ENCODE measurements at regions of chr12 and their contacts with region 1.

Region 1: GRCh38 chr12:51970904-51971646 is 19.6 kb downstream of the ACVR1B start:
- DNase-seq: peak; percentile 79
- H3K4me3 Mint-ChIP-seq: peak overlapping the region; percentile 55
- H3K27ac Mint-ChIP-seq: peak overlapping the region; percentile 82
- H3K4me1 Mint-ChIP-seq: peaks cover 61% of the 10 kb centered on the region
- H3K27me3 Mint-ChIP-seq: no peaks in the 10 kb centered on the region

Region 2: GRCh38 chr12:50151047-50151687 is 1819.9 kb before region 1 on chr12:
- CTCF ChIA-PET with region 1: no interaction called
- intact Hi-C with region 1: no loop called
- DNase-seq: no peak
- H3K4me3 Mint-ChIP-seq: no peak overlapping the region
- H3K27ac Mint-ChIP-seq: no peak overlapping the region
- H3K4me1 Mint-ChIP-seq: peaks cover 23% of the 10 kb centered on the region
- H3K27me3 Mint-ChIP-seq: no peaks in the 10 kb centered on the region

Region 3: GRCh38 chr12:51368640-51369517 is 602.2 kb before region 1 on chr12:
- CTCF ChIA-PET with region 1: no interaction called
- intact Hi-C with region 1: loop called (anchors 1 kb)
- DNase-seq: peak; percentile 97
- H3K4me3 Mint-ChIP-seq: peak overlapping the region; percentile 37
- H3K27ac Mint-ChIP-seq: peak overlapping the region; percentile 86
- H3K4me1 Mint-ChIP-seq: peaks cover 41% of the 10 kb centered on the region
- H3K27me3 Mint-ChIP-seq: no peaks in the 10 kb centered on the region

Region 4: GRCh38 chr12:51823875-51824565 is 147.1 kb before region 1 on chr12:
- CTCF ChIA-PET with region 1: interaction called, 5 read pairs
- intact Hi-C with region 1: loop called (anchors 1 kb)
- DNase-seq: peak; percentile 50
- H3K4me3 Mint-ChIP-seq: no peak overlapping the region
- H3K27ac Mint-ChIP-seq: no peak overlapping the region
- H3K4me1 Mint-ChIP-seq: peaks cover 28% of the 10 kb centered on the region
- H3K27me3 Mint-ChIP-seq: no peaks in the 10 kb centered on the region

Region 5: DNA sequence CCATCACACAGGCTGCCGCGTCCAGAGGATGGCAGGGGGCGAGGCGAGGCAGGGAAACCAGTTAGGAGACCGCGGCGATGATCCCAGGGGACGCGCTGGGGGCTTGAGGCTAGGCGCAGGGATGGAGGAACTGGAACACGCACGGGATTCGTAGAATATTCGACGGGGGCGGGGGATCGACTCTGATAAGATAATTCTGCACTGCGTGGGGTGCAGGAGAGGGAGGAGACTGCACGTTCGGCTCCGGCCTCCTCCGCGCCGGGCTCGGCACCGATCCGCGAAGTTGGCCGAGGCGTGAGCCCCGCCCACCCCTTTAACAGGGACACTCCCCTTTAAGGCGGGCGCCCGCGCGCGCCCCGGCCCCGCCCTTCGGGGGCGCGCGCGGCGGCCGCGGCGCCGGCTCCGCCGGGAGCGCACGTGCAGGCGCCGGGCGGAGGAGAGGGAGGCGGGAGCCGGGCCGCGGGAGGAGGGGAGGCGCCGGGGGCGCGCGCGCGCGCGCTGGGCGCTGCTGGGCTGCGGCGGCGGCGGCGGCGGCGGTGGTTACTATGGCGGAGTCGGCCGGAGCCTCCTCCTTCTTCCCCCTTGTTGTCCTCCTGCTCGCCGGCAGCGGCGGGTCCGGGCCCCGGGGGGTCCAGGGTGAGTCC is 19.8 kb before region 1 on chr12 and contains the start of gene ACVR1B:
- CTCF ChIA-PET with region 1: interaction called, 8 read pairs
- intact Hi-C with region 1: loop called (anchors 1 kb)
- DNase-seq: peak; percentile 91
- H3K4me3 Mint-ChIP-seq: peak within 1 kb of the TSS; percentile 93
- H3K27ac Mint-ChIP-seq: peak within 1 kb of the TSS; percentile 54
- H3K4me1 Mint-ChIP-seq: peaks cover 41% of the 10 kb centered on the region
- H3K27me3 Mint-ChIP-seq: peaks cover 4% of the 10 kb centered on the region
- total RNA-seq, gene ACVR1B: 8.7 to 9.1 TPM

Region 6: DNA sequence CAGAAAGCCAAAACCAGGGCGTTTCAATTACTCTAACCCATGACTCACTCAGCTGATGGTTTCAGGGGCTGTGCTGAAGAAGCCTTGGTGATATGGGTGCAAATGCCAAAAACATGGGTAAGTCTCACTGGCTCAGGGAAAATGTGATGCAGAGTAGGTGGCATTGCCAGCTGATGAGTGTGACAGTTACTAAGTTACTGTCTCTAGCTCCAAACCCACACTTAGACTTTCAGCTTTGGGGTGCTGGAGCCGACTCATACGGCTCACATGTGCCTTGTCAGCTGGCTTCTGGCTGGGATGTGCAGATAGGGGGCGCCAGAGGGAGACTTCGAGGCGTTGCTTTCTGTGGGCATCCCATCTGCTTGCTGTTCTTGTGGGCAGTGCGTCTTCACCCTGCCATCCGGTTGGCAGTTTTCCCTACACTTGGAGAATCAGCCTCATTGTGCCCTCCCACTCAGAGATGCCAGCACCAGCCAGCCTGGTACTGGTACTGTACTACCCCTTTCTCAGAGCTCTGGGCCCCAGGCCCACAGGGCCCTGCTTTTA is 250.9 kb after region 1 on chr12:
- CTCF ChIA-PET with region 1: no interaction called
- intact Hi-C with region 1: loop called (anchors 10 kb)
- DNase-seq: peak; percentile 96
- H3K4me3 Mint-ChIP-seq: no peak overlapping the region
- H3K27ac Mint-ChIP-seq: peak overlapping the region; percentile 14
- H3K4me1 Mint-ChIP-seq: peaks cover 22% of the 10 kb centered on the region
- H3K27me3 Mint-ChIP-seq: peaks cover 25% of the 10 kb centered on the region

Region 7: GRCh38 chr12:52389313-52390207 is 418.5 kb after region 1 on chr12:
- CTCF ChIA-PET with region 1: no interaction called
- intact Hi-C with region 1: no loop called
- DNase-seq: no peak
- H3K4me3 Mint-ChIP-seq: no peak overlapping the region
- H3K27ac Mint-ChIP-seq: no peak overlapping the region
- H3K4me1 Mint-ChIP-seq: no peaks in the 10 kb centered on the region
- H3K27me3 Mint-ChIP-seq: no peaks in the 10 kb centered on the region